GM12878 (cell line): ENCODE measurements at regions of chr9 and their contacts with region 1.

Region 1: GRCh38 chr9:113511856-113512761 is 48.6 kb downstream of the RGS3 start:
- DNase-seq: peak; percentile 81
- ATAC-seq: peak; percentile 74
- H3K4me3 ChIP-seq: peak overlapping the region; percentile 42; the same call in 1 of the 2 replicates
- H3K27ac ChIP-seq: peak overlapping the region; percentile 68
- H3K4me1 ChIP-seq: peaks cover 41% of the 10 kb centered on the region
- H3K27me3 ChIP-seq: no peaks in the 10 kb centered on the region
- CTCF ChIP-seq: no peak
- EP300 ChIP-seq: peak; percentile 7 to 84; a peak in 2 of 4 replicates
- POLR2A ChIP-seq: no peak
- RAD21 ChIP-seq: no peak

Region 2: DNA sequence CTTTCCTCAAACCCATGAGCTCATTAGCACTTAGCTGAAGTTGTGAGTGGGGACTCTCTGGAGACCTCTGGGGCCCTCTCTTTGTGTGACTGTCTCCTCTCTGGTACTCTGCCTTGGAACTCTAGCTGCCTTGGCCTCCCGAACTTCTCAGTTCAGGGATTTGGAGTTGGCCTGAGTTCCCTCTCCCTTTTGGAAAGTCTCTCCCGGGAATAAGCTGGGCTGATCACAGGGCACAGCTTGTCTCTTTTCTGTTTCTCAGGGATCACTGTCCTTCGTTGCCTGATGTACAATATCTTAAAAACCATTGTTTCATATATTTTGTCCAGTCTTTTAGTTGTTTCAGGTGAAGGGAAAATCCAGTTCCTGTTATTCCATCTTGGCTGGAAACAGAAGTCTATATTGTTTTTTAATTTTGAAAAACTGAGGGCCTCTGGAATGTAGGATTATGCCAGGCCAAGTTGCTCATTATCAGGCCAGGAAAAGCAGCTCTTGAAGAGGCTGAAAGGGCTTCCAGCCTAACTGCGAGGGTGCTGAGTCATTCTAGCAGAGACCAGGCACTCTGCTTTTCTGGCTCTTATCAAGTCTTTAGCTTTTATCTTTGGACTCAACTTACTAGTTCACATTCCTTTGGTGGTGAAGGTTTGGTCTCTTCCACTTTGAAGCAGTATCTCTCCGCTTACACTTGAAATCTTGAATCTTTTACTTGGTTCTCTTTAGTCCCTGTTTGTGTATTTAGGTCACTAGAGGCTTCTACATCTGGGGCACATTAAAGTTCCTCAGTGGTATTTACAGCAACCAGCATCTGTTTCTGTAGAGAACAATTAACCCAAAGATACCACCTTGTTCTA is 57.0 kb before region 1 on chr9:
- CTCF ChIA-PET with region 1: no interaction called
- POLR2A ChIA-PET with region 1: interaction called, 7 read pairs
- RAD21 ChIA-PET with region 1: interaction called, 14 read pairs
- SMC1A ChIA-PET with region 1: interaction called, 17 read pairs
- in situ Hi-C with region 1: no loop called
- intact Hi-C with region 1: no loop called
- DNase-seq: no peak
- ATAC-seq: peak; percentile 71
- H3K4me3 ChIP-seq: no peak overlapping the region
- H3K27ac ChIP-seq: no peak overlapping the region
- H3K4me1 ChIP-seq: peaks cover 9% of the 10 kb centered on the region
- H3K27me3 ChIP-seq: no peaks in the 10 kb centered on the region
- CTCF ChIP-seq: no peak
- EP300 ChIP-seq: no peak
- POLR2A ChIP-seq: no peak
- RAD21 ChIP-seq: no peak

Region 3: DNA sequence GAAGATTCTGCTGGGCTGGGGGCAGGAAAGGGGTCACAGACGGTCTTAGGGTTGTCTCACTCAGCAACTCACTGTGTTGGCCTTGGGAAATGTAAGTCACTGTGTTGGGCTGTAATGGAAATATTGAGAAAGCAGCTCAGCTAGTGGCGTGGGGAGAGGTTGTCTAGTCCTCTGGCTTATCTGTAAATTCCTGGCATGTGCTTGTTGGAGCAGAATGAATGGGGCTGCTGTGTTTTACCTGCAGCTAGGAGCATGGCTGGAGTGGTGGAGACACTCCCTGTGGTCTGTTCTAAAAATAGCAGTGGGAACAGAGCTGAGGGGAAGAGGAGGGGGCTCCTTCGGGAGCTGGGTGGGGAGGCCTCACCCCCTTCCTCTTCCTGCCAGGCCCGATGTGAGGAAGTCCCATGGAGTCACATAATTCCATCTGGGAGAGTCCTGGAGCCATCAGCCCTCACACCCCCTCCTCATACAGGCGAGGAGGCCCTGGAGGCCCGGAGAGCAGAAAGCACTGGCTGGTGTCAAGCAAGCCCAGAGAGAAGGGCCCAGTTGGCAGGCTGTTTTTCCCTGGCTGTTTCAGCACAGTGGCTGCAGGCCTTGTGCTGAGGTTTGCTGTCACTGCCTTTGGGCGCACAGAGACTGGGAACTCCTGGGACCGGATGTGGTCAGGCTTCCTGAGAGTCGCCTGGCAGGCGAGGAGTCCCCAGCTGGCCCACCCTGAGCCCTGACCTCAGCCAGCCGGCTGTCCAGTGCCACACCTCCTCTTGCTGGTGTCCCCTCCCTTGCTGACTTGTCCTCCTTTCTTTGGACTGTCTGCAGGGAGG is 36.3 kb after region 1 on chr9:
- CTCF ChIA-PET with region 1: no interaction called
- POLR2A ChIA-PET with region 1: no interaction called
- RAD21 ChIA-PET with region 1: no interaction called
- SMC1A ChIA-PET with region 1: no interaction called
- in situ Hi-C with region 1: no loop called
- intact Hi-C with region 1: no loop called
- DNase-seq: no peak
- ATAC-seq: peak; percentile 60
- H3K4me3 ChIP-seq: no peak overlapping the region
- H3K27ac ChIP-seq: no peak overlapping the region
- H3K4me1 ChIP-seq: peaks cover 6% of the 10 kb centered on the region
- H3K27me3 ChIP-seq: no peaks in the 10 kb centered on the region
- CTCF ChIP-seq: no peak
- EP300 ChIP-seq: no peak
- POLR2A ChIP-seq: no peak
- RAD21 ChIP-seq: no peak

Region 4: GRCh38 chr9:113564498-113565237 is 52.6 kb after region 1 on chr9:
- CTCF ChIA-PET with region 1: interaction called, 5 read pairs
- POLR2A ChIA-PET with region 1: interaction called, 15 read pairs
- RAD21 ChIA-PET with region 1: interaction called, 481 read pairs
- SMC1A ChIA-PET with region 1: interaction called, 8 read pairs
- in situ Hi-C with region 1: no loop called
- intact Hi-C with region 1: no loop called
- DNase-seq: no peak
- ATAC-seq: peak; percentile 6
- H3K4me3 ChIP-seq: no peak overlapping the region
- H3K27ac ChIP-seq: no peak overlapping the region
- H3K4me1 ChIP-seq: peaks cover 17% of the 10 kb centered on the region
- H3K27me3 ChIP-seq: no peaks in the 10 kb centered on the region
- CTCF ChIP-seq: no peak
- EP300 ChIP-seq: no peak
- POLR2A ChIP-seq: no peak
- RAD21 ChIP-seq: no peak